ENCODE measurements at regions of chr5 and their contacts with region 1.

Region 1: GRCh38 chr5:159915904-159916840 is at the start of gene ADRA1B:
- DNase-seq: peak; percentile 73 to 89
- H3K4me3 ChIP-seq: peak within 1 kb of the TSS; percentile 44 to 52 (median 50)
- H3K27ac ChIP-seq: peak within 1 kb of the TSS in 3 of 5 donors; percentile 17 to 79 (median 38)
- H3K4me1 ChIP-seq: peaks cover 0 to 44% (median 26%) of the 10 kb centered on the region in 4 donors
- H3K27me3 ChIP-seq: peaks cover 0 to 52% (median 16%) of the 10 kb centered on the region in 3 donors
- CTCF ChIP-seq: peak in 4 of 7 experiments; percentile 12 to 77 (median 50)
- EP300 ChIP-seq: no peak
- POLR2A ChIP-seq: no peak
- total RNA-seq, gene ADRA1B: 0.18 to 9.3 (median 0.45) TPM in 3 of 5 donors, not detected in the others

Region 2: DNA sequence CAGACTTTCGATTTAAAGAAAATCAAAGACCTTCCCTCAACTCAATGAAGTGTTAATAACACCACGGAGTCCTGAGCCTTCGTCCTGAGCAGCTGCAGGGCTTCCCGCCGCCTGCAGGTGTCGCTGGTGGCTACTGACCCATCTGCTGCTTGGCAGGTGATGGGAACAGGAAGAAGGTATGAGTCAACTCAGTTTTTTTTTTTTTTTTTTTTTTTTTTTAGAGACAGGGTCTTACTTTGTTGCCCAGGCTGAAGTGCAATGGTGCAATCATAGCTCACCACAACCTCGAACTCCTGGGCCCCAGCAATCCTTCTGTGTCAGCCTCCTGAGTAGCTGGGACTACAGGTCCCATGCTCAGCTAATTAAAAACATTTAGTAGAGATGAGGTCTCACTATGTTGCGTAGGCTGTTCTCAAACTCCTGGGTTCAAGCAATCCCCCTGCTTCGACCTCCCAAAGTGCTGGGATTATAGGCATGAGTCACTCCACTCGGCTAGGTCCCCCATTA is 400.2 kb before region 1 on chr5:
- intact Hi-C with region 1: loop called (anchors 10 kb)
- DNase-seq: peak; percentile 73 to 74
- H3K4me3 ChIP-seq: no peak overlapping the region
- H3K27ac ChIP-seq: no peak overlapping the region
- H3K4me1 ChIP-seq: peaks cover 0 to 14% (median 6%) of the 10 kb centered on the region in 4 donors
- H3K27me3 ChIP-seq: peaks cover 0 to 4% (median 0%) of the 10 kb centered on the region in 3 donors
- CTCF ChIP-seq: peak in 5 of 7 experiments; percentile 58 to 79 (median 70)
- EP300 ChIP-seq: no peak
- POLR2A ChIP-seq: no peak

Region 3: DNA sequence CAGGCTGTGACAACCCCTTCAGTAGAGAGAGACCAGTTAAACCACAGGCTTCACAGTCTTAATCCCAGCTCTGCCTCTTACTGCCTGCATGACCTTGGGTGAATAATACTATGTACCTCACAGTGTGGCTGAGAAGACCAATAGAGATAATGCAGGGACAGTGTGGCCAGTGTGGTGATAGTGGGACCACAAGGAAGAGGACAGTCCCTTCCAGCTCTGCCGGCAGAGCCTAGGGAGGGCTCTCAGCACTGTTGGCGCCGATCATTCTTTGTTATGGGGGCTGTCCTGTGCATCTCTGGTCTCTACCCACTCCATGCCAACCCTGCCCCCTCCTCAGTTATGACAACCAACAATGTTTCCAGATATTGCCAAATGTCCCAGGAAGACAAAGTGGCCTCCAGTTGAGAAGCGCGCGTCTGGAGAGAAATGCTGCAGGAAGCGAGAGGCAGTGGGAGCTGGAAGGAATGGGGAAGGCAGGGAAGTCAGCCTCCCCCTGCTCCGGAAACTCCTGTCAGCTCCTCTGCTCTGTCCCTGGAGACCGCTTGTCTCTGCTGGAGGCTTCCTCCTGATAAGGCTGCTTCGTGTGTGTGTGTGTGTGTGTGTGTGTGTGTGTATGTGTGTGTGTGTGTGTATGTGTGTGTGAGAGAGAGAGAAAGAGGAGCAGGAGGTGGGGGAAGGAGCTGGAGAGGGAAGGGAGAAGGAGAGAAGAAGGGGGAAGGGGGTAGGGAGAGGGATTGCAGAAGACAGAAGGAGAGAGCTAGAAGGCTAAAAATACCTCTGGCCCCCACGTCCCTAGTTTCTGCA is 281.4 kb after region 1 on chr5:
- intact Hi-C with region 1: no loop called
- DNase-seq: peak in 1 of 2 donors; percentile 71
- H3K4me3 ChIP-seq: no peak overlapping the region
- H3K27ac ChIP-seq: no peak overlapping the region
- H3K4me1 ChIP-seq: peaks cover 0 to 15% (median 10%) of the 10 kb centered on the region in 4 donors
- H3K27me3 ChIP-seq: peaks cover 0 to 18% (median 0%) of the 10 kb centered on the region in 3 donors
- CTCF ChIP-seq: no peak
- EP300 ChIP-seq: no peak
- POLR2A ChIP-seq: no peak